Psoas muscle (tissue), 8 donors: ENCODE measurements at regions of chr19 and their contacts with region 1.

Region 1: DNA sequence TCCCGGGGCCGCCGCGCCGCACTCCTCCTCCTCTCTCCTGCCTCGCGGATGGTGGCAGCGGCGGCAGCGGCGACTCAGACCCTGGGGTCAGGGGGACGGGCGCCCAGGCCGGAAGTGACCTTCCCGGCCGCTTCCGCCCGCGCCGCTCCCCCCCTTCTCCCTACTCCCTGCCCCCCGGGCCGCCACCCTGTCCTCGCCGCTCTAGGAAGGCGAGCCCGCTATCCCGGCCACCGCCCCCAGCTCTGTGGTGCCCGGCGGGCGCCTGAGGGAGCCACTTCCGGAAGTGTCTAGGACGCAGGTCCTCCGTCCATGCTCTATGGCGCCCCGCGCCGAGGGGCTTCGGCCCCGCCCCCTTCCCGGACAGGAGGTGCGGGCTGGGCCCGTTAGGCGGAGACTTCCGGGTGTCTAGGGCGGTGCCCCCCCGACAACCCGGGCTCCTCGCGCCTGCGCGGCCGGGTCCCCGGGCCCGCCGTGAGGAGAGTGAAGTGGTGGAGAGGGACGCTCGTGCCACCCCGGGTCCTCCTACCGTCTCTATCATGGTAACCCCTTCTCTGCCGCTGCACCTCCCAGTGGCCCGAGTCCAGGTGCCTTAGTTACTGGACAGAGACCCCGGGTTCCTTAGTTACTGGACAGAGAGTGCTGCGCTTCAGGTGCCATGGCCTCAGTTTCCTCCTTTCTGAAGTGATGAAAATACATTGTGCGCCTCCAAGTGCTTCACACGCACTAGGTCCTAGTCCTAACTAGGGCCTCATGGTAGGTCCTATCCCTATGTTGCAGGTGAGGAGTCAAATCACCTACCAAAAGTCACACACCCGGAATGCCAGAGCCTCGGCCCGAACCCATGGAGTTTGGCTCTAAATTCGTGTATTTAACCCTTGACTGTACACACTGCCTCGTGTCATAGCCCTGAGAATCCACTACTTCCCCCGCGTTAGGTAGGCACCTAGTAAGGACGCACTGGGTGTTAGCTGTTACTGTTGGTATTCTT is at the start of gene ZNF787:
- DNase-seq: peak; percentile 99 to 100
- ATAC-seq: peak; percentile 90 to 91 (median 91)
- H3K4me3 ChIP-seq: peak within 1 kb of the TSS; percentile 90
- H3K27ac ChIP-seq: peak within 1 kb of the TSS; percentile 97
- H3K4me1 ChIP-seq: peaks cover 36% of the 10 kb centered on the region
- H3K27me3 ChIP-seq: no peaks in the 10 kb centered on the region
- CTCF ChIP-seq: no peak
- total RNA-seq, gene ZNF787: 33.3 to 62.7 (median 54.2) TPM

Region 2: GRCh38 chr19:55923556-55923955 is 197.9 kb before region 1 on chr19:
- intact Hi-C with region 1: no loop called
- DNase-seq: no peak
- ATAC-seq: no peak
- H3K4me3 ChIP-seq: no peak overlapping the region
- H3K27ac ChIP-seq: no peak overlapping the region
- H3K4me1 ChIP-seq: no peaks in the 10 kb centered on the region
- H3K27me3 ChIP-seq: no peaks in the 10 kb centered on the region
- CTCF ChIP-seq: no peak

Region 3: DNA sequence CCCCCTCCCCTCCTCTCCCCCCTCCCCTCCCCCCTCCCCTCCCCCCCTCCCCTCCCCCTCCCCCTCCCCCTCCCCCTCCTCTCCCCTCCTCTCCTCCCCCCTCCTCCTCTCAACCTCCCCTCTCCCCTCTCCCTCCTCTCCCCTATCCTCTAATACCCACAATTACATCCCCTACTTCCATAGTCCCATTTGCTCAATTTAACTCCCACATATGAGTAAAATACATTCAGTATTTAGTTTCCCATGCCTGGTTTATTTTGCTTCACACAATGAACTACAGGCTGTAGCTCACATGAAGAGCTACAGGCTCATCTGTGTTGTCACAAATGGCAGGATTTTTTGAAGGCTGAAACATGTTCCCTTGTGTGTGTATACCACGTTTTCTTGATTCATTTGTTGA is 128.0 kb before region 1 on chr19:
- intact Hi-C with region 1: no loop called
- DNase-seq: no peak
- ATAC-seq: no peak
- H3K4me3 ChIP-seq: no peak overlapping the region
- H3K27ac ChIP-seq: no peak overlapping the region
- H3K4me1 ChIP-seq: no peaks in the 10 kb centered on the region
- H3K27me3 ChIP-seq: no peaks in the 10 kb centered on the region
- CTCF ChIP-seq: no peak

Region 4: DNA sequence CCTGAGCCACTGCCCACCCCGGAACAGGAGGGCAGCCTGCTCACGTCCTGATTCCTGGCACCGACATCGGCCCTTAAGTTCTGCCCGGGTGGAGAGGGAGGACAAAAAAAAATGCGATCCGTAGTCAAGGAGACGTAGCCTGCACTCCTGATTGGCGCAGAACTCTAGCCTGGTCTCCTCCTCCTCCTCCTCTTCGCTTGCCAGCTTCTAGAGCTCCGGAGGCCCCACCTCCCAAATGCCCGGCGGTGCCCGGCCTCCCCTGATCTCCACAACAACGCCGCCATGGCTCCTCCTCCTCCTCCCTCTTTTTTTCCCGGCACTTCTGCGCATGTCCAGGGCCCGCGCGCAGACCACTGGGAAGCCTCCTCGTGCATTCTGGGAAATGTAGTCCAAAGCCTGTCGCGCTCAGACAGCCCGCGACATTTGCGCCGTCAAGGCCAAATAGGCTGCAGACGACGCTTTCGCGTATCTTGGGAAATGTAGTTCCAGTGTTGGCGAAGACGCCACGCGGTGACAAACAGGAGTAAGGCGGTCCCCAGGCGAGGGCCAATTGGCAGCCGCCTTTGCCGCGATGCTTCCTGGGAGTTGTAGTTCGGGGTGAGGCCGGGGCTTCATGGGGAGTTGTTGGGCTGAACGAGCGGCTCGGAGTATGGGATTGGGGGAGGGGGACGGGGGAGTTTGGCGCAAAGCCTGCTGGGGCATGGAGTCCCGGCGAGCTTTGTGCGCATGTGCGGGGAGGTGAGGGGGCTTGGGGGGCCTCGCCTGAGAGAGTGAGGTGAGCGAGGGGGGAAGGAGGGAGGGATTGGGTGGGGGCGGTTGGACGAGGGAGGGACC is 19.3 kb after region 1 on chr19 and contains the start of gene ZNF444:
- intact Hi-C with region 1: loop called in 1 of 2 experiments (anchors 2 kb)
- DNase-seq: peak; percentile 98 to 99
- ATAC-seq: peak; percentile 93 to 97 (median 96)
- H3K4me3 ChIP-seq: peak within 1 kb of the TSS; percentile 88
- H3K27ac ChIP-seq: peak within 1 kb of the TSS; percentile 86
- H3K4me1 ChIP-seq: peaks cover 13% of the 10 kb centered on the region
- H3K27me3 ChIP-seq: no peaks in the 10 kb centered on the region
- CTCF ChIP-seq: no peak
- total RNA-seq, gene ZNF444: 12.0 to 20.6 (median 16.6) TPM

Region 5: GRCh38 chr19:56189785-56190184 is 68.3 kb after region 1 on chr19:
- intact Hi-C with region 1: no loop called
- DNase-seq: no peak
- ATAC-seq: no peak
- H3K4me3 ChIP-seq: no peak overlapping the region
- H3K27ac ChIP-seq: no peak overlapping the region
- H3K4me1 ChIP-seq: no peaks in the 10 kb centered on the region
- H3K27me3 ChIP-seq: no peaks in the 10 kb centered on the region
- CTCF ChIP-seq: no peak